ENCODE measurements at regions of chr9 and their contacts with region 1.

Region 1: GRCh38 chr9:90142580-90142979 is 500.0 kb downstream of the DIRAS2 start:
- DNase-seq: peak; percentile 31
- H3K4me3 ChIP-seq: no peak overlapping the region
- H3K27ac ChIP-seq: no peak overlapping the region
- H3K4me1 ChIP-seq: no peaks in the 10 kb centered on the region
- H3K27me3 ChIP-seq: no peaks in the 10 kb centered on the region
- CTCF ChIP-seq: peak; percentile 21 to 26
- POLR2A ChIP-seq: no peak

Region 2: GRCh38 chr9:90368241-90368640 is 225.7 kb after region 1 on chr9:
- CTCF ChIA-PET with region 1: no interaction called
- POLR2A ChIA-PET with region 1: no interaction called
- dilution Hi-C with region 1: no loop called
- intact Hi-C with region 1: no loop called
- DNase-seq: no peak
- H3K4me3 ChIP-seq: no peak overlapping the region
- H3K27ac ChIP-seq: no peak overlapping the region
- H3K4me1 ChIP-seq: no peaks in the 10 kb centered on the region
- H3K27me3 ChIP-seq: no peaks in the 10 kb centered on the region
- CTCF ChIP-seq: no peak
- POLR2A ChIP-seq: no peak

Region 3: DNA sequence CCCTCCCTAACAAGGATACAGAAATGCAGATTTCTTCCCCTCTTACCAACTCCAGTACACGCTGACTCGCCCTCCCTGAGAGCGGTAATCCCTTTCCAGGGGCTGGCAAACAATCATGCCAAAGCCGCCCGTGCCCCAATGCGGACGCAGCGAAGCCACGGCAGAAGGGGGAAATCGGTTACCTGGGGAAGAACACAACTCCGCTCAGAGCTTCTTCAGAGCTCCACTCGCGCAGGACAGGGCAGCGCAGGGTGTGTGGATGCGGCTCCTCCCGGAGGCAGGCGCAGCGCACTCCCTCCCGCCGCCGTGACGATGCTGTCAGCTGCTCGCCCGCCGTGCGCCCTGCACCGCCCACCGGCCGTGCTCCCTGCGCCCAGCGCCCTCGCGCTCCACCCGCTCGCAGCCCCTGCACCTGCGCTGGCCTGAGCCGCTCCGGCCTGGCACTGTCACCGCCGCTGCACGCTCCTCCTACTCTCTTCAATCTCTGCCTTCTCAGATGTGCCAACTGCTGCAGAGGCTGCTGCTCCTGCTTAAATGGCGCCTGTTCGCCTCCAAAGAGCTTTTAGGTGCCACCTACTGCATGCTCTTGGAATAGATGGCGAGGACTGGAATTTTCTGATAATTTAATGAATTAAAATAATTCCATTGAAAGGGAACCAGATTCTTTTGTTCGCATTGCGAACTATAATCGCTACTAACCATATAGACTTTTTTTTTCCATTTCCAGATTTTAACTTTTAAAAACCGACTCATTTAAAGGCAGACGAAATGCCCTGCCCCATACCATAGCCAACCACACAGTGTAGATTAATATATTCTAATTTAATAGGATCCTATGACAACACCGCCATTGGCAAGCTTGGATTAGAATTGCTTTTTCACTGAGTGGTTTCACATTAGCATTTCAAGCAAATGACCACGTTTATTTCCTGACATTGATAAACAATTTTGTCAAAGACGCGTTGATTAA is 500.3 kb after region 1 on chr9 and contains the start of gene DIRAS2:
- CTCF ChIA-PET with region 1: no interaction called
- POLR2A ChIA-PET with region 1: no interaction called
- dilution Hi-C with region 1: no loop called
- intact Hi-C with region 1: loop called (anchors 10 kb)
- DNase-seq: peak; percentile 30
- H3K4me3 ChIP-seq: no peak within 1 kb of the TSS
- H3K27ac ChIP-seq: no peak within 1 kb of the TSS
- H3K4me1 ChIP-seq: no peaks in the 10 kb centered on the region
- H3K27me3 ChIP-seq: peaks cover 3 to 8% of the 10 kb centered on the region in 2 experiments
- CTCF ChIP-seq: peak in 1 of 2 donors; percentile 5
- POLR2A ChIP-seq: no peak
- total RNA-seq, gene DIRAS2: not detected in 2 replicates

Region 4: DNA sequence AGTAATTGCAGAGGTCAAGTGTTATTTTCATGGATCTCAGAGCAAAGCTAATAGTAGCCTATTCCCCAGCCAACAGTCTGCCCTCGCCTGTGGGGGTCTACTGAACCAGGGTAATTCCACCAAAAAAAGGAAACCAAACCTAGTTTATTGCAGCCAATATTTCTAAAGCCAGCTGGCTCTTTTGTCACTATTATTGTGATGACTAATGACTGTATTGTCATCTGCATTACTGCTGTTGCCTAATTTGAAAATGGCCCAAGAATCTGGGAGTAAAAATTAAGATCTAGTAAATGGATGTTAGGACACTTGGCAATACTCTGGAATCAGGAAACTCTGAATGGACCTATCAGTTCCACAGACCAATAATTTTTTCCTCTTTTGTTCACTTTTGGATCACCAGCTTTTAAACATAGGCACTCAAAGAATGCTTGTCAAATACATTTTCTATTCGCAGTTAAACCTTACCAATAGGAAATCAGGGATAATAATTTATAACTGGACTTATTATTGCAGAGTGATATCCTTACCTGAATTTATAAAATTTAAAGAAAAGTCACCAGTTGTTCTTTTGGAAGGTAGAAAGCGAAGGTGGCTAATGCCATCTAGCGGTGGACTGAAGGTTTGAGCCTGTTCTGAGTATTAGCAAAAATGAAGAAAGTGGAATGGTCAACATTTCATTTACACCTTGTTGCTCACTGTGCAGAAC is 728.2 kb after region 1 on chr9:
- CTCF ChIA-PET with region 1: interaction called, 37 read pairs
- POLR2A ChIA-PET with region 1: no interaction called
- dilution Hi-C with region 1: no loop called
- intact Hi-C with region 1: loop called (anchors 1 kb)
- DNase-seq: peak; percentile 32
- H3K4me3 ChIP-seq: no peak overlapping the region
- H3K27ac ChIP-seq: no peak overlapping the region
- H3K4me1 ChIP-seq: no peaks in the 10 kb centered on the region
- H3K27me3 ChIP-seq: no peaks in the 10 kb centered on the region
- CTCF ChIP-seq: peak; percentile 63 to 65
- POLR2A ChIP-seq: no peak

Region 5: DNA sequence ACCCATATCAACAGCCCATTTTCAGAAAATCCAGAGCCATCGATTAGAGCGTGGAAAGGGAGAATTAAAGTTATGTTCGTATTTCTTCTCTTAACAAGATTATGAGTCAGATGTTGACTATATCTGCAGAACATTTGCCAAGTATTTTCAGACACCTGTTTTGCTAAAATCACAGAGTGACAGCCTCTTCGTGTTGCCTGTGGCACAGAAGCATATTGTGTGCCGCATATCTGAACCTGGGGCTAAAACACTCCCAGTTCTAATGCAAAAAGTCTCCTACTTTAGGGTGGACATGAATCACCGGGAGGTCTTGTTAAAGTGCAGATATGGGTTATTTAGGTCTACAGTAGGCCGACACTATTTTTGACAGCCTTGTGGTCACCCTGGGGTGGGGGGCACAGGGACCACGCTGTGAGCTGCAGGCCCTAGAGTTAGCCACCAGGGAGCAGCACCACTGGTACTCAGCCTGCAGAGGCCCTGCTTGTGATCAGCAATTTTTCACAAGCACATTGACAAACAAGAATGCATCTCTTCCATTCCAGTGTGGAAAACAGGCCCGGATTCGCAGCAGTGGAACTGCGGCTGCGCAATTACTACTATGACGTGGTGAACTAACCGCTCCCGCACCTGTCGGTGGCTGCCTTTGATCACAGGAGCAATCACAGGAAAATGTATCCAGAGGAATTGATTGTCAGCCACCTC is 752.6 kb after region 1 on chr9:
- CTCF ChIA-PET with region 1: no interaction called
- POLR2A ChIA-PET with region 1: no interaction called
- dilution Hi-C with region 1: no loop called
- intact Hi-C with region 1: no loop called
- DNase-seq: peak; percentile 9
- H3K4me3 ChIP-seq: no peak overlapping the region
- H3K27ac ChIP-seq: no peak overlapping the region
- H3K4me1 ChIP-seq: no peaks in the 10 kb centered on the region
- H3K27me3 ChIP-seq: peaks cover 2 to 8% of the 10 kb centered on the region in 2 experiments
- CTCF ChIP-seq: peak; percentile 29 to 74
- POLR2A ChIP-seq: no peak

Region 6: GRCh38 chr9:91361291-91362050 is 1218.9 kb after region 1 on chr9 and contains the start of gene AUH:
- CTCF ChIA-PET with region 1: no interaction called
- POLR2A ChIA-PET with region 1: no interaction called
- dilution Hi-C with region 1: no loop called
- intact Hi-C with region 1: loop called (anchors 5 kb)
- DNase-seq: peak; percentile 82
- H3K4me3 ChIP-seq: peak within 1 kb of the TSS; percentile 84 to 95 (median 88)
- H3K27ac ChIP-seq: peak within 1 kb of the TSS; percentile 26
- H3K4me1 ChIP-seq: peaks cover 15% of the 10 kb centered on the region
- H3K27me3 ChIP-seq: no peaks in the 10 kb centered on the region
- CTCF ChIP-seq: no peak
- POLR2A ChIP-seq: peak; percentile 50
- total RNA-seq, gene AUH: 9.2 and 10.7 TPM in 2 replicates